Activated naive CD4-positive, alpha-beta T cell treated with anti-CD3 and anti-CD28 coated beads for 36 hours (primary cell): ENCODE measurements at regions of chr5 and their contacts with region 1.

Region 1: GRCh38 chr5:139633295-139634027 is 14.7 kb upstream of the CXXC5 start:
- DNase-seq: peak; percentile 71
- H3K4me3 Mint-ChIP-seq: no peak overlapping the region
- H3K27ac Mint-ChIP-seq: no peak overlapping the region
- H3K4me1 Mint-ChIP-seq: peaks cover 28% of the 10 kb centered on the region
- H3K27me3 Mint-ChIP-seq: no peaks in the 10 kb centered on the region

Region 2: GRCh38 chr5:139358064-139358463 is 275.4 kb before region 1 on chr5:
- CTCF ChIA-PET with region 1: no interaction called
- intact Hi-C with region 1: no loop called
- DNase-seq: no peak
- H3K4me3 Mint-ChIP-seq: no peak overlapping the region
- H3K27ac Mint-ChIP-seq: no peak overlapping the region
- H3K4me1 Mint-ChIP-seq: peaks cover 23% of the 10 kb centered on the region
- H3K27me3 Mint-ChIP-seq: no peaks in the 10 kb centered on the region

Region 3: GRCh38 chr5:139422307-139422893 is 211.1 kb before region 1 on chr5:
- CTCF ChIA-PET with region 1: interaction called, 13 read pairs
- intact Hi-C with region 1: loop called (anchors 2 kb)
- DNase-seq: peak; percentile 77
- H3K4me3 Mint-ChIP-seq: no peak overlapping the region
- H3K27ac Mint-ChIP-seq: no peak overlapping the region
- H3K4me1 Mint-ChIP-seq: peaks cover 5% of the 10 kb centered on the region
- H3K27me3 Mint-ChIP-seq: no peaks in the 10 kb centered on the region

Region 4: GRCh38 chr5:139574641-139575312 is 58.7 kb before region 1 on chr5:
- CTCF ChIA-PET with region 1: interaction called, 8 read pairs
- intact Hi-C with region 1: loop called (anchors 1 kb)
- DNase-seq: no peak
- H3K4me3 Mint-ChIP-seq: no peak overlapping the region
- H3K27ac Mint-ChIP-seq: no peak overlapping the region
- H3K4me1 Mint-ChIP-seq: peaks cover 74% of the 10 kb centered on the region
- H3K27me3 Mint-ChIP-seq: no peaks in the 10 kb centered on the region

Region 5: DNA sequence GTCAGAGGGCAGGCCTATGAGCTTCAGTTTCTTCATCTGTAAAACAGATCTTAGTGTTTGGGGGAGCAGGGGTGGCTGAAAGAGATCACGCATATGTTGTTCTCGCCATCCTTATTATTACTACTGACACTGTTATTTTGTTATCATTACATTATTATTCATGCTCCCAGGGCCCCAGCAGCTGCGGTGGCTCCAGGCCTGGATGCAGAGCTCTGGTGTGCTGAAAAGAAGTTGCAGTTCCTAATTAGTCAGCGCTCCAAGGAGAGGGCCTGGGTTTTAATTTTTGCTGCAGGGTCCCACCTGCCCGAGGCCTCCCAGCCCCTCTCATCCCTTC is 34.2 kb after region 1 on chr5:
- CTCF ChIA-PET with region 1: interaction called, 3 read pairs
- intact Hi-C with region 1: loop called (anchors 1 kb)
- DNase-seq: no peak
- H3K4me3 Mint-ChIP-seq: no peak overlapping the region
- H3K27ac Mint-ChIP-seq: no peak overlapping the region
- H3K4me1 Mint-ChIP-seq: peaks cover 28% of the 10 kb centered on the region
- H3K27me3 Mint-ChIP-seq: peaks cover 12% of the 10 kb centered on the region

Region 6: DNA sequence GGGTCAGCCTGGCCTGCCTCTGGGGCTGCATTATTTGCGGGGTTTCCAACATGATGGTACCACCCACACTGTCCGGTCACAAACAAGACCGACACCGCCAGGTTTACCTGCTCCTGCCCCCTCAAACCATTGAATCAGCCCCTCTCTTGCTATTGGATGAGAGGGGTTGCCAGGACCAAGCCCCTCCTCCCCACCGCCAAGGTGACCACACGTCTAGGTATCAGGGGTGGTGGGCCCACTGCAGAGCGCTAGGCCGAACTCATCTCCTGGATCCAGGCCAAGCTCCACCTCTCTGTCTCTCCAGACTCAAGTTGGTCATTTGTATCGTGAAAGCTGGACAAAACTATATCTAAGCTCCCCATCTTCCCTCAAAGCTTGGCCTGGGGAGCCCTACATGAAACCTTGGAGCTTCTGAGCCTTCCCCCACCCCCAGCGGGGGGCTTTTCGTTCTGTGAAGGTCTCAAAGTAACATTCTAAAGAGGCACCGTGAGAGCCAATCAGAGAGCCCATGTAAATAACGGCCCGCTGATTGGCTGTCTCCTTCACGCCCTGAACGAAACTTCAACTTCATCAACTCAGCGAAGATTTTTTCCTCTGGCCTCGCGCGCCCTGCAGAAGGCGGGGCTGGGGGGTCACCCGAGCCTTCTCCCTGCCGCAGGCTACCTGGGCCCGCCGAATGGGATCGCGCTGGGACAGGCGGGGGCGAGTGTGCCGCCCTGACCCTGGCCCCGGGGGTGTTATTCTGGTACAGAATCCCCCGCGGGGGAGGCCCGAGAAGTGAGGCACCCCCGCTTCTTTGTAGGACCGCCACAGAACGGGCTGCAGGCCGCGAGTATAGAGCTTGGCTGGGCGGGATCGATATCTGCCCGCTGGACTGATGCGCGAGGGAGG is 112.6 kb after region 1 on chr5:
- CTCF ChIA-PET with region 1: interaction called, 7 read pairs
- intact Hi-C with region 1: loop called (anchors 1 kb)
- DNase-seq: peak; percentile 50
- H3K4me3 Mint-ChIP-seq: peak overlapping the region; percentile 72
- H3K27ac Mint-ChIP-seq: no peak overlapping the region
- H3K4me1 Mint-ChIP-seq: peaks cover 21% of the 10 kb centered on the region
- H3K27me3 Mint-ChIP-seq: peaks cover 15% of the 10 kb centered on the region

Region 7: DNA sequence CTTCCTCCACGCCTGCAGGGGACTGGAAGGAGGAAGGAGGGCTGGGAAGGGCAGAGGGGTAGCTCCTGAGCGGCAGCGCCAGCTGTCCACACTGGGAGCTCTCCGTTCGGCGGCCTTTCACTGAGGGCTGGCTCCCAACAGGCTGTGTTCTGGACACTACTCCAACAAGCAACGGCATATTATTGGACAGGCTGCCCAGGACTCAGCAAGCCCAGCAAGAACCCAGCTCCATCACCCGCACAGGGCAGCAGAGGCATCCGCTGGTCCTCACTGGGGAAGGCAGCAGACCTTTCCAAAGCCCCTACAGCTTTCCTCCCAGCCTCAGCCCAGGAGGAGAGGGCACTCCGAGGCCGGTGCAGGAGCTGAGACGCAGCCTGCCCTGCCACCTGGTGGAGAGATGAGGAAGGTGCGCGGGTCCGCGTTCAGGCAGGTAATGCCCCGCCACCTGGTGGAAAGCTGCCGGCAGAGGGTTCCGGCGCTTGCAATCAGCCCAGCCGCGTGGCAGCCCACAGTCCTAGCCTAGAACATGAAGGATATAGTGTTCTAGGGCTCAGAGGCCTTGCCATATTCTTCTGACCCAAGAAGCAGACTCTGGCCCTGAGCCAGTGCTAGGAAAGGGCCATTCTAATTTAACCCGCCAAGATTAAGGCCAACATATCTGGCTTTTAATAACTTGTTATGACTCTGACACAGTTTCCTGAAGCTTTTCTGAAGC is 335.2 kb after region 1 on chr5:
- CTCF ChIA-PET with region 1: no interaction called
- intact Hi-C with region 1: loop called (anchors 10 kb)
- DNase-seq: peak; percentile 95
- H3K4me3 Mint-ChIP-seq: no peak overlapping the region
- H3K27ac Mint-ChIP-seq: no peak overlapping the region
- H3K4me1 Mint-ChIP-seq: no peaks in the 10 kb centered on the region
- H3K27me3 Mint-ChIP-seq: peaks cover 12% of the 10 kb centered on the region